IMR-90 (cell line): ENCODE measurements at regions of chr4 and their contacts with region 1.

Region 1: DNA sequence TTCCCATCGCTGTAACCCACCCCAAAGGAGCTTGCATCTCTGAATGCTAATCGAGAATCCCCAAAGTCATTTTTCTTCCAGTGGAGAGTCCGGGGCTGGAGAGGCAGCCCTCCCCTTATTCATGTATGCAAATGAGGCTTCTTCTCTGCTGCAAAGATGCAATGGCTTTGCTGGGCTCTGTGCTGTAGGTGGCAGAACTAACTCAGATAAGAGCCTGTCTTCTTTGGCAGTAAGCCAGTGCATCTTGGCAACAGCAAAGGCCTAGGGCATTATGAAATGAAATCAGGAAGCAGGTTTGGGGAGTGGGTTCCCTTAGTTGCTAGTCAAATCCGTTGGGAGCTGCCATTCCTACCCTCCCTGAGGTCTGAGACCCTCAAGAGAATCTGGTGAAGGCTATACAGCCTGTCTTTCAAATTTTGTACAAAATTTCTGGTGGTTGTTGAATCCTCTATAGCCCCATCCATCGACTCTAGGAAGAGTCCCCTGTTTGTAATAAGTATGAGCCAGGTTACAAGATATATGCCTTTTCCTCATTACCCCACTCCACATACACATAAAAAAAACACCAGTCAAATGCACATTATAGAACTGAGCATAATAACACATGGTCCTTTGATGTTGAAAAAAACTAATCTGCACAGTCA is 290.6 kb upstream of the TAPT1 start:
- DNase-seq: peak; percentile 85
- ATAC-seq: peak; percentile 85
- H3K4me3 ChIP-seq: no peak overlapping the region
- H3K27ac ChIP-seq: no peak overlapping the region
- H3K4me1 ChIP-seq: no peaks in the 10 kb centered on the region
- H3K27me3 ChIP-seq: no peaks in the 10 kb centered on the region
- CTCF ChIP-seq: peak; percentile 75
- POLR2A ChIP-seq: no peak
- RAD21 ChIP-seq: peak; percentile 79

Region 2: GRCh38 chr4:16056681-16057385 is 460.1 kb before region 1 on chr4:
- CTCF ChIA-PET with region 1: no interaction called
- POLR2A ChIA-PET with region 1: no interaction called
- dilution Hi-C with region 1: no loop called
- in situ Hi-C with region 1: no loop called
- intact Hi-C with region 1: no loop called
- DNase-seq: no peak
- ATAC-seq: no peak
- H3K4me3 ChIP-seq: no peak overlapping the region
- H3K27ac ChIP-seq: no peak overlapping the region
- H3K4me1 ChIP-seq: no peaks in the 10 kb centered on the region
- H3K27me3 ChIP-seq: peaks cover 31% of the 10 kb centered on the region
- CTCF ChIP-seq: no peak
- POLR2A ChIP-seq: no peak
- RAD21 ChIP-seq: no peak

Region 3: GRCh38 chr4:16278178-16278577 is 238.7 kb before region 1 on chr4:
- CTCF ChIA-PET with region 1: no interaction called
- POLR2A ChIA-PET with region 1: no interaction called
- dilution Hi-C with region 1: no loop called
- in situ Hi-C with region 1: no loop called
- intact Hi-C with region 1: no loop called
- DNase-seq: no peak
- ATAC-seq: no peak
- H3K4me3 ChIP-seq: no peak overlapping the region
- H3K27ac ChIP-seq: no peak overlapping the region
- H3K4me1 ChIP-seq: no peaks in the 10 kb centered on the region
- H3K27me3 ChIP-seq: peaks cover 9% of the 10 kb centered on the region
- CTCF ChIP-seq: peak; percentile 42
- POLR2A ChIP-seq: no peak
- RAD21 ChIP-seq: peak; percentile 31

Region 4: DNA sequence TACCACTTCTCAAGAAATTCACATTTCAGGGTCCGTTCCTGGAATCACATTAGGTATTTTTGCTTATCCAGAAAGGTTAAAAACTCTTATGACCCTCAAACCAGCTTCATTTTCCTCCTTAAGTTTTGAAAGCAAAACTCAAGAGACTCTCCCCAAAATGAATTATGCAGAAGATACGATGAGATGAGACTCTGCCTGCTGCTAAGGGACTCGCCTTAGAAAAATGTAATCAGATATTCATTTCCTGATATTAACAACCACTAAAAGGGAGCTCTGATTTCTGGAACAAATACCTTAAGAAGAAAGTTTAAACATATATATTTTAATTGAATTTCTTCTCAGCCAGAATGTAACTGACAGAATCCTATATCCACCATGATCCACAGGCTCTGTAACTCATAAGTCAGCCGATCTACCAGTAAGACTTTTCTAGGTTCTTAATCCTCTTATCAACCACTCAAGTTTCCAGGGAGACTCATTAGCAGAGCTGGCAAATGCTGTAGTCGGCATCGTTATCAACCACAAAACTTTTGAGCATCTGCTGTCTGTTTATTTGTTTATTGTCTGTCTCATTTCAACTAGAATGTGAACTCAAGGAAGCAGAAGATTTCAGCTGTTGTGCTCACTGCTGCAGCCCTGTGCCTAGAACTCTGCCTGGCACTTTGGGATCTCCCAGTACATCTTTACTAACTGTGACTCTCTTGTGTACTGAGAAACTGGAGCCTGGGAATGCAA is 269.0 kb after region 1 on chr4:
- CTCF ChIA-PET with region 1: interaction called, 4 read pairs
- POLR2A ChIA-PET with region 1: no interaction called
- dilution Hi-C with region 1: no loop called
- in situ Hi-C with region 1: no loop called
- intact Hi-C with region 1: loop called (anchors 2 kb)
- DNase-seq: peak; percentile 76
- ATAC-seq: peak; percentile 67
- H3K4me3 ChIP-seq: no peak overlapping the region
- H3K27ac ChIP-seq: peak overlapping the region; percentile 57; the same call in 1 of the 2 replicates
- H3K4me1 ChIP-seq: peaks cover 12% of the 10 kb centered on the region
- H3K27me3 ChIP-seq: no peaks in the 10 kb centered on the region
- CTCF ChIP-seq: peak; percentile 11; the same call in 1 of the 2 replicates
- POLR2A ChIP-seq: no peak
- RAD21 ChIP-seq: peak; percentile 16

Region 5: DNA sequence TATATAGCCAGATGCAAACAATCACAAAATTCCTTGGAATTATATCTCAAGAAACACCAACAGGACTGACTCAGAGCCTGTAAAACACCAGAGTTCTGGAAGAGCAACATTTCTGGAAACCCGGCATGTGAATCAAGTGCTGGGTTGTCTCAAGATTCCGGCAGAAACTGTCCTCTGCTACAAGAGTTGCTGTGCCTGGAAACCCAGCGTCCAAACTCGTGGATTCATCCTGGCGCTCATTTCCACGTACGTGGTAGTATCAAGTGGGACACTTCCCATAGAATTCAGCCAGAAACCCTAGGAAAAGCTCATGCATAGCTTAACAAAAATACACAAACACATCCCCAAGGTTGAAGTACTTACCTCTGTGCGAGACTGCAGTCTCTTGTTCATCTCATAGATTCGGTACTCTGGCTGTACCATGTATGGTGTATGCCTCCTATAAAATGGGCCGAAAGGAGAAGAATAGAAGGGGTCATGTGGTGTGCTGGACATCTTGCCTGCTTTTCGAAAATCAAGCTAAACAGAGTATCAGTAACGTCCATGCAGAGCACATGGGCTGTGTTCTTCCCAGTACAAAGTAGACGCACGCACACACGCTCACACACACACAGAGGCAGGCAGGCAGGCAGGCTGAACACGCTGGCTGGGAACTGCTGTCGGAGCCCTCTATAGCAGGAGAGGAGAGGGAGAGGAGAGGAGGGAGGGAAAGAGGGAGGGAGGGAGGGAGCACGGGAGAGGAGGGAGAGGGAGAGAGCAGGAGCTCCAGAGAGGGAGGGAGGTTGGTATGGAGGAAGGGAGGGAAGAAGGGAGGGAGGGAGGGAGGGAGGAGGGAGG is 381.3 kb after region 1 on chr4 and contains the start of gene LDB2:
- CTCF ChIA-PET with region 1: no interaction called
- POLR2A ChIA-PET with region 1: no interaction called
- dilution Hi-C with region 1: no loop called
- in situ Hi-C with region 1: no loop called
- intact Hi-C with region 1: loop called (anchors 5 kb)
- DNase-seq: peak; percentile 88
- ATAC-seq: peak; percentile 81
- H3K4me3 ChIP-seq: peak within 1 kb of the TSS; percentile 88
- H3K27ac ChIP-seq: peak within 1 kb of the TSS; percentile 99
- H3K4me1 ChIP-seq: peaks cover 11% of the 10 kb centered on the region
- H3K27me3 ChIP-seq: no peaks in the 10 kb centered on the region
- CTCF ChIP-seq: no peak
- POLR2A ChIP-seq: no peak
- RAD21 ChIP-seq: no peak; the same call in 1 of the 2 replicates
- total RNA-seq, gene LDB2: 92.8 and 116 TPM in 2 replicates

Region 6: GRCh38 chr4:16952462-16952871 is 435.5 kb after region 1 on chr4:
- CTCF ChIA-PET with region 1: no interaction called
- POLR2A ChIA-PET with region 1: no interaction called
- dilution Hi-C with region 1: no loop called
- in situ Hi-C with region 1: no loop called
- intact Hi-C with region 1: no loop called
- DNase-seq: no peak
- ATAC-seq: peak; percentile 67
- H3K4me3 ChIP-seq: no peak overlapping the region
- H3K27ac ChIP-seq: peak overlapping the region; percentile 12; the same call in 1 of the 2 replicates
- H3K4me1 ChIP-seq: peaks cover 2% of the 10 kb centered on the region; the same call in 1 of the 2 replicates
- H3K27me3 ChIP-seq: no peaks in the 10 kb centered on the region
- CTCF ChIP-seq: no peak
- POLR2A ChIP-seq: no peak
- RAD21 ChIP-seq: no peak

Region 7: GRCh38 chr4:17336524-17336961 is 819.6 kb after region 1 on chr4:
- CTCF ChIA-PET with region 1: no interaction called
- POLR2A ChIA-PET with region 1: no interaction called
- dilution Hi-C with region 1: no loop called
- in situ Hi-C with region 1: loop called (anchors 10 kb)
- intact Hi-C with region 1: no loop called
- DNase-seq: peak; percentile 48
- ATAC-seq: no peak
- H3K4me3 ChIP-seq: no peak overlapping the region
- H3K27ac ChIP-seq: no peak overlapping the region
- H3K4me1 ChIP-seq: no peaks in the 10 kb centered on the region
- H3K27me3 ChIP-seq: peaks cover 4% of the 10 kb centered on the region; the same call in 1 of the 2 replicates
- CTCF ChIP-seq: no peak
- POLR2A ChIP-seq: no peak
- RAD21 ChIP-seq: no peak

Region 8: GRCh38 chr4:17468371-17469221 is 951.7 kb after region 1 on chr4:
- CTCF ChIA-PET with region 1: interaction called, 4 read pairs
- POLR2A ChIA-PET with region 1: no interaction called
- dilution Hi-C with region 1: no loop called
- in situ Hi-C with region 1: no loop called
- intact Hi-C with region 1: loop called (anchors 5 kb)
- DNase-seq: peak; percentile 44
- ATAC-seq: no peak
- H3K4me3 ChIP-seq: no peak overlapping the region
- H3K27ac ChIP-seq: no peak overlapping the region
- H3K4me1 ChIP-seq: peaks cover 2% of the 10 kb centered on the region; the same call in 1 of the 2 replicates
- H3K27me3 ChIP-seq: peaks cover 2% of the 10 kb centered on the region; the same call in 1 of the 2 replicates
- CTCF ChIP-seq: peak; percentile 46; the same call in 1 of the 2 replicates
- POLR2A ChIP-seq: no peak
- RAD21 ChIP-seq: peak; percentile 48